Activated naive CD4-positive, alpha-beta T cell treated with anti-CD3 and anti-CD28 coated beads for 36 hours (primary cell): ENCODE measurements at regions of chr1 and their contacts with region 1.

Region 1: DNA sequence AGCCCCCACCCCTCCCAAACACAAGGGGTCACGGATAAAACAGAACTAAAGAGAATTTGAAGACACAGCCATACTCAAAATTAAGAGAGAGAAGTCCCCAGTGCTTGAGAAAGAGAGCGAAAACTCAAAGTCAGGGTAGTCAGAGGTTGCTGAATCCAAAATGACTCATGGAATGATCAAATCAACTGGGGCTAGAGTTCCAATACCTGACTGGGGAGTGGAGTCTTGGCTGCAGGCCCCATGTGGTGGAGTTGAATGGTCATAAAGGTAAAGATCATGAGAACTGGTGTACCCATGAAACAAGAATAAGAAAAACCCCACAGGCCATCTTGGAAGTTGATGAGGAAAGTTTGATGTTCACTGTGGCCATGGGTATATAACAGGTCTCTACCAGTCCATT is 84.5 kb upstream of the LRRN2 start:
- DNase-seq: no peak
- H3K4me3 Mint-ChIP-seq: no peak overlapping the region
- H3K27ac Mint-ChIP-seq: no peak overlapping the region
- H3K4me1 Mint-ChIP-seq: no peaks in the 10 kb centered on the region
- H3K27me3 Mint-ChIP-seq: peaks cover 3% of the 10 kb centered on the region

Region 2: DNA sequence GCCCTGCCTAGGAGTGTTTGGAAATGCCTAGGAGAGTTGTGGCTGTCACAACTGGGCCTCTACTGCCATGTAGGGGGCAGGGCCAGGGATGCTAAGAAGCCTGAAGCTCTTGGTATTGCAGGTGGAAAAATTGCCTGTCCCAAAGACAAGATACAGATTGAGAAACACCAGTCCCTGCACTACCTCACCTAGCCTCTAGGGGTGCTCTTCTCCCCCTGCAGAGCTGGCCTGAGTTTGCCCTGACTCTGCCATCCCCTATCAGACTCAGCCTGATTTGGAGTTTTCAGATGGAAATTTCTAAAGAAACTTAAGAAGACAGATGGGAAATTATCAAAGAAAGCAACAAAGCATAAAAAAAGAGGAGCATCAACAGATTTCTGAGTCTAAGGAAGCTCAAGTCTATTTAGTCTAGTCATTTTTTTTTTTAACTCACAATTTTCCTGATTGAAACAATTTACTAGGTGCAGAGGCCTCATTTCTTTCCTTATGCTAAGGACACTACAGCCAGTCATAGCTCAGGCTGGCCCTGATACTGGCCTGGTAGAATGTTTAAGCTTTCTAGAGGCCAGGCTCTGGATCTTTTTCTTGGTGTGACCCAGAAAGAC is 23.1 kb before region 1 on chr1:
- CTCF ChIA-PET with region 1: interaction called, 31 read pairs
- intact Hi-C with region 1: no loop called
- DNase-seq: peak; percentile 65
- H3K4me3 Mint-ChIP-seq: no peak overlapping the region
- H3K27ac Mint-ChIP-seq: no peak overlapping the region
- H3K4me1 Mint-ChIP-seq: no peaks in the 10 kb centered on the region
- H3K27me3 Mint-ChIP-seq: peaks cover 13% of the 10 kb centered on the region